ENCODE measurements at regions of chr12 and their contacts with region 1.

Region 1: GRCh38 chr12:70576346-70577282 is 60.6 kb downstream of the PTPRB start:
- DNase-seq: peak in 1 of 2 experiments; percentile 57
- H3K4me3 ChIP-seq: no peak overlapping the region
- H3K4me3 Mint-ChIP-seq: no peak overlapping the region
- H3K27ac Mint-ChIP-seq: no peak overlapping the region
- H3K4me1 ChIP-seq: no peaks in the 10 kb centered on the region
- H3K4me1 Mint-ChIP-seq: no peaks in the 10 kb centered on the region
- H3K27me3 ChIP-seq: no peaks in the 10 kb centered on the region
- H3K27me3 Mint-ChIP-seq: no peaks in the 10 kb centered on the region
- CTCF ChIP-seq: peak; percentile 77

Region 2: GRCh38 chr12:69879041-69879960 is 697.3 kb before region 1 on chr12:
- CTCF ChIA-PET with region 1: interaction called, 7 read pairs
- POLR2A ChIA-PET with region 1: no interaction called
- intact Hi-C with region 1: loop called (anchors 1 kb)
- DNase-seq: peak; percentile 67 to 76
- H3K4me3 ChIP-seq: peak overlapping the region; percentile 31
- H3K4me3 Mint-ChIP-seq: peak overlapping the region; percentile 68
- H3K27ac Mint-ChIP-seq: no peak overlapping the region
- H3K4me1 ChIP-seq: no peaks in the 10 kb centered on the region; the same call in 1 of the 2 replicates
- H3K4me1 Mint-ChIP-seq: peaks cover 9% of the 10 kb centered on the region
- H3K27me3 ChIP-seq: no peaks in the 10 kb centered on the region; the same call in 1 of the 2 replicates
- H3K27me3 Mint-ChIP-seq: peaks cover 25% of the 10 kb centered on the region
- CTCF ChIP-seq: peak; percentile 90 to 93

Region 3: DNA sequence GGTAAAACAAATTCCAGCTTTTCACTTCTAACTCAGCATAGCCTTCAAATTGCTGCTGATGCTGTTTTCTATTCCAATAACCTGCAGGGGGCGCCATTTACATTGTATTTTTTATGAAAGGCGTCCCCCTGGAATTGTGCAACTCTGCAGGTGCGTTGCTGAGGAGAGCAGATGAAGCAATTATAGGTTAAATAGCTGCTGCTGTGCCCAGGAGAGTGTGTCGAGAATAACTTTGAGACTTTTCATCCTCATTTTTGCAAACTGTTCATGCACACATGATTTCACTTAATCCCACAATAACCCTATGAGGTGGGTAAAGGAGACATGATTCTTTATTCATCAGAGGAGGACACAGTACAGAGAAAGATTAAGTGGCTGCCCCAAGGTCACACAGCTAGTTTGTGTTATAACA is 675.9 kb before region 1 on chr12:
- CTCF ChIA-PET with region 1: interaction called, 7 read pairs
- POLR2A ChIA-PET with region 1: no interaction called
- intact Hi-C with region 1: loop called (anchors 1 kb)
- DNase-seq: peak; percentile 71 to 81
- H3K4me3 ChIP-seq: no peak overlapping the region
- H3K4me3 Mint-ChIP-seq: no peak overlapping the region
- H3K27ac Mint-ChIP-seq: no peak overlapping the region
- H3K4me1 ChIP-seq: no peaks in the 10 kb centered on the region
- H3K4me1 Mint-ChIP-seq: no peaks in the 10 kb centered on the region
- H3K27me3 ChIP-seq: no peaks in the 10 kb centered on the region
- H3K27me3 Mint-ChIP-seq: peaks cover 2% of the 10 kb centered on the region
- CTCF ChIP-seq: peak; percentile 60 to 89

Region 4: DNA sequence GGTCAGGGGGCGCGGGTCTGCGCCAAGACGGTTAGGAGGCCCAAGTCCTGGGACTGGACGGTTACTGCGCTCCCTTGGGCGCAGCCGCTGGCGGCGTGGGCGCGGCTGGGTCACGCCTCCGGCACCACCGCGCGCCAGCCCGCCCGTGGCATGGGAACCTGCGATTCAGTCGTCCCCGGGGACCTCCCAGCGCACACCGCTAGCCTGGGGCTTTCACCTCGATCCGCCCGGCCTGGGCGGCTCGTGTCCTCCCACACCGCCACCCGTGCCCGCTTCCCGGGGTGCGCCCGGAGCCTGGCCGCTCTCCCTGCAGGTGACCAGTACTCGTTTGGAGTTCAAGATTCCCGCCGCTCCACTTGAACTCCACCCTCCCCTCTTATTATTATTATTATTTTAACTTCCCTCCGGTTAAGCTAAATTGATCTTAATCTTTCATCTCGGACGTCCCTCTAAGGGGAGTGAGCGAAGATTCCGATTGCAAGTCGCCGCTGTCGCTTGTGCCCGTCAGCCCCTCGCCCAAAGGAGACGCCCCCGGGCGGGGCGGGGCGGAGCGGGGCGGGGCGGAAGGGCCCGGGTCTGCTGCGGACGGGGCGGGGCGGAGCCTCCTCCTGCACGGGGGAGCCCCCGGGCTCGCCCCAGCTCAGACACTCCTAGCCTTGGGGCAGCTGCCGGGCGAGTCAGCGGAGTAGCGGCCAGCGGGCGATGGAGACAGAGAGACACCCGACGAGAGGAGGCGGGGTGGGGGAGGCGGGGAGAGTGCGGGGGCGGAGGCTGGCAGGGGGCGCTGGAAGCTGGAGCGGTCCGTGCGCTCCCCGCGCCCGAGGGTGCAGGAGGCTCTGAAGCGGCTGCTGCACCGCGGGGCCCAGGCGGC is 210.7 kb before region 1 on chr12 and contains the start of gene KCNMB4:
- CTCF ChIA-PET with region 1: interaction called, 3 read pairs
- POLR2A ChIA-PET with region 1: no interaction called
- intact Hi-C with region 1: loop called (anchors 1 kb)
- DNase-seq: peak; percentile 69 to 83
- H3K4me3 ChIP-seq: peak within 1 kb of the TSS; percentile 53
- H3K4me3 Mint-ChIP-seq: peak within 1 kb of the TSS; percentile 94
- H3K27ac Mint-ChIP-seq: peak within 1 kb of the TSS; percentile 58
- H3K4me1 ChIP-seq: peaks cover 10% of the 10 kb centered on the region; the same call in 1 of the 2 replicates
- H3K4me1 Mint-ChIP-seq: no peaks in the 10 kb centered on the region
- H3K27me3 ChIP-seq: no peaks in the 10 kb centered on the region
- H3K27me3 Mint-ChIP-seq: peaks cover 11% of the 10 kb centered on the region
- CTCF ChIP-seq: no peak
- total RNA-seq, gene KCNMB4: 0.23 TPM in 1 of 2 replicates, not detected in the other

Region 5: GRCh38 chr12:70402600-70402999 is 174.0 kb before region 1 on chr12:
- CTCF ChIA-PET with region 1: interaction called, 9 read pairs
- POLR2A ChIA-PET with region 1: no interaction called
- intact Hi-C with region 1: loop called (anchors 1 kb)
- DNase-seq: no peak
- H3K4me3 ChIP-seq: no peak overlapping the region
- H3K4me3 Mint-ChIP-seq: no peak overlapping the region
- H3K27ac Mint-ChIP-seq: no peak overlapping the region
- H3K4me1 ChIP-seq: no peaks in the 10 kb centered on the region
- H3K4me1 Mint-ChIP-seq: peaks cover 6% of the 10 kb centered on the region
- H3K27me3 ChIP-seq: no peaks in the 10 kb centered on the region
- H3K27me3 Mint-ChIP-seq: peaks cover 5% of the 10 kb centered on the region
- CTCF ChIP-seq: no peak